ENCODE measurements at regions of chr6 and their contacts with region 1.

Region 1: DNA sequence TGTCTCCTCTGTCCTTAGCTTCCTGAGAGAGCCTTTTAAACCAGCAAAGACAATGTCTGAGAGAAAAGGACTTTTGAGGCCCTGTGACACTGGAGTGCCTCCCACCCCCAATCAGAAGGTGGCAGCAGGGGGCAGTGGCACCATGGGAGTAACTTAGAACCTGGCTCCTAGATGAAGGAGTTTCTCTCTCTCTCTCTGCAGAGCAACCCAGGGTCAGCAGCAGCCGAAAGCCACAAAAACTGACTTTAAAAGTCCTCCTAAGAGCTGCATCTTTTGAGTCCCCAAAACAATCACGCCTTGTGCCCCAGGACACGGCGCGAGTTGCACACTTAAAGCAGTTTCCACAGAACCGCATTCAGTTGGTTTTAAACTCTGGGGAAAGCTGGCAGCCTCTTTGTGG is 5.3 kb upstream of the TCP11 start:
- DNase-seq: peak; percentile 37 to 40
- ATAC-seq: peak; percentile 67 to 90 (median 86)
- H3K4me3 ChIP-seq: no peak overlapping the region
- H3K27ac ChIP-seq: no peak overlapping the region
- H3K4me1 ChIP-seq: peaks cover 0 to 11% (median under 1%) of the 10 kb centered on the region in 9 donors
- H3K27me3 ChIP-seq: peaks cover 0 to 1% (median 0%) of the 10 kb centered on the region in 7 donors
- CTCF ChIP-seq: peak; percentile 42 to 72 (median 63)

Region 2: GRCh38 chr6:34867484-34867883 is 279.0 kb before region 1 on chr6:
- intact Hi-C with region 1: loop called in 1 of 10 experiments (anchors 5 kb)
- DNase-seq: no peak
- ATAC-seq: peak in 7 of 8 donors; percentile 26 to 66 (median 48)
- H3K4me3 ChIP-seq: no peak overlapping the region
- H3K27ac ChIP-seq: peak overlapping the region in 7 of 10 donors; percentile 13 to 76 (median 48)
- H3K4me1 ChIP-seq: peaks cover 0 to 35% (median 19%) of the 10 kb centered on the region in 9 donors
- H3K27me3 ChIP-seq: no peaks in the 10 kb centered on the region
- CTCF ChIP-seq: peak in 7 of 9 donors; percentile 11 to 51 (median 33)

Region 3: DNA sequence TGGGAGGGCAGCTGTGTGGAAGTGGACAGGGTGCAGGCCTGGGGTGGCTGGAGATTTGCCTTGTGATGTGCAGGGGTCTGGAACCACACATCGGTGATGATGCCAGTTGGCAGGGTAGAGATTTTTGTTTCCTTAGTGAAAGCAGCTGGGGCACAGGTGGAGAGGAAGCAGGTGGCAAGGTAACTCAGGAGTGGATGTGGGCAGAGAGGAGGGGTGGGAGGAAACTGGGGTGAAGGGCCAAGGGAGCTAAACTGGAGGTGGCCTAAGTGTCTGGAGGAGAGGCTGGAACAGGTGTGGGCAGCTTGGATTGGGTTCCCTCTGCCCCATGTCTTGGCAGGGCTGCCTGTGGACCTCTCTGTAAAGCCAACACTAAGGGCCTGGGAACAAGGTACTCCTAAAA is 62.6 kb after region 1 on chr6:
- intact Hi-C with region 1: loop called (anchors 1 to 10 kb)
- DNase-seq: no peak
- ATAC-seq: no peak
- H3K4me3 ChIP-seq: no peak overlapping the region
- H3K27ac ChIP-seq: no peak overlapping the region
- H3K4me1 ChIP-seq: peaks cover 0 to 8% (median 5%) of the 10 kb centered on the region in 9 donors
- H3K27me3 ChIP-seq: peaks cover 0 to 49% (median 14%) of the 10 kb centered on the region in 7 donors
- CTCF ChIP-seq: no peak